Cardiac septum (tissue), 1 donor: ENCODE measurements at regions of chr14 and their contacts with region 1.

Region 1: GRCh38 chr14:56422703-56423213 is 156.8 kb upstream of the TMEM260 start:
- DNase-seq: no peak

Region 2: GRCh38 chr14:55707365-55707804 is 715.4 kb before region 1 on chr14:
- intact Hi-C with region 1: loop called (anchors 5 kb)
- DNase-seq: no peak

Region 3: DNA sequence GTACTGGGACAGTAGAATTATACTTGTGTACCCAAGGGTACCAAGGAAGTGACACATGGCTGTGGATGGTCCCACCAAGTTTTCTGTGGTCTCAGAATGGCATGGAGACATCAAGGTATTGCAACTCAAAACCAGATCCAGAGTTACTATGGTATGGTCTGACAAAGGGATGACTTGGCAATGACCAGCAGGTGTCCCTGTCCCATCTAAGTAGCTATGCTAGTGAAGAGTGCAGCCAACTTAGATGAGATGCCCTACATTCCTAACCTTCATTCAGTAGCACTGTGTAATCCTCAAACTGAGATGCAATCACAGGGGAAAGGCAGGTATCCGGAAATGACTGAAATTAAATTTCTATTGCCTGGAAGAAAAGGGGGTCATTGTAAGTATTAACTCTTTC is 31.9 kb before region 1 on chr14:
- intact Hi-C with region 1: no loop called
- DNase-seq: no peak